Dorsolateral prefrontal cortex (tissue), 120 donors: ENCODE measurements at regions of chr5 and their contacts with region 1.

Region 1: DNA sequence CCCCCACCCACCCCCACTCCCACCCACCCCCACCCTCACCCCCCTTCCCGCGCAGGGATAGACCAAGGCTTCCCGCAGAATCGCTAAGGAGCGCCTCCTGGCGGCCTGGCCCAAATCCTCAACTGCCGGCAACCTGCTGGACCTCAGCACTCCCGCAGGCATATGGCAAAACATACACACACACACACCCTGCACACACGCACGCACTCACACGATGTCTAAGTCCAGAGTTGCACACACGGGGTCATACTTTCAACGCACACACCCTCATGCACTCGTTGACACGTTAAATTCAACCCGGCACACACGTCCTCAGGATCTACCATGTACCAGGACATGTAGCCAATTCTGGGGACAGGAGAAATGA is 1.7 kb downstream of the CPLX2 start:
- DNase-seq: peak; percentile 47 to 87 (median 70)
- H3K4me3 ChIP-seq: peak overlapping the region in 54 of 59 donors; percentile 1 to 72 (median 56)
- H3K27ac ChIP-seq: peak overlapping the region in 21 of 59 donors; percentile 2 to 88 (median 39)
- H3K27me3 ChIP-seq: peaks cover 0 to 49% (median 19%) of the 10 kb centered on the region in 45 donors
- CTCF ChIP-seq: peak in 31 of 56 donors; percentile 10 to 49 (median 27)

Region 2: GRCh38 chr5:175796536-175797499 is 76.3 kb before region 1 on chr5:
- intact Hi-C with region 1: loop called in 1 of 2 experiments (anchors 5 kb)
- DNase-seq: peak in 7 of 10 donors; percentile 43 to 75 (median 59)
- H3K4me3 ChIP-seq: peak overlapping the region; percentile 14 to 70 (median 55)
- H3K27ac ChIP-seq: peak overlapping the region in 58 of 59 donors; percentile 54 to 96 (median 84)
- H3K27me3 ChIP-seq: peaks cover 0 to 30% (median 0%) of the 10 kb centered on the region in 45 donors
- CTCF ChIP-seq: peak in 24 of 56 donors; percentile 8 to 54 (median 24)

Region 3: DNA sequence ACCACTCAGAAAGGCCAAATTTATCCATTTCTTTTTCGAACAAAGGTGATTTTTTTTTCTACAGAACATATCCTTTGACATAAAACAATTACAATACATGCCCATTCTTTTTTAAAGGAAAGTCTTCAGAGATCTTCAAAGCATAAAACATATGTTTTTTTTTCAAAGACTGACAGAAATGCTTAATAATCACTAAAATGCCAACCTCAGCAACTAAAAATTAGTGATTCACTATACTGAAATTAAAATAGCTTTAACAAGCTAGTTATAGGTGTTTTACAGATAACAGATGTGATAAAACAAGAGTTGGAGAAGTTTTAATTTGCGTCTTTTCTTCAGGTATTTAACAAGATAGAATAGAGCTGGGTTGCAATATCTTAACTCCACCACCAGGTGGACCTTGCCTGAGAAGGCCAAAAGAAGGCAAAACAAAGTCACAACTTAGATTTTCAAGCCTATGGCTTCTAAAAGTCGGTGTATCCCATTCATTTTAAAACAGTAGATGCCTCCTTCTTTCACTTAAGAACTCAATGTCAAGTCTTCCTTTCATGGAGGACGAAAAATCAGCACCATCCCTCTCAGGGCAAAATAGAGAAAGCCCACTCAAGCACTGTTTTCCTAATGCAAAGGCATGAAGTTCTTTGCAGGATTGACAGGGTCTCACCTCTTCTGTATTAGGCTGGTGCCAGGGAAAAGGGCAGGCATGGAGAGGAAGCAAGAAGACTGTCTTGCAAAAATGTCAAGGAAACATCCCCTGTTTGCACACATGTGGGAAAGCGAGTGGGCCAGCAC is 32.8 kb before region 1 on chr5:
- intact Hi-C with region 1: no loop called
- DNase-seq: no peak
- H3K4me3 ChIP-seq: no peak overlapping the region
- H3K27ac ChIP-seq: no peak overlapping the region
- H3K27me3 ChIP-seq: no peaks in the 10 kb centered on the region
- CTCF ChIP-seq: peak in 46 of 56 donors; percentile 16 to 62 (median 36)